GM12878 (cell line): ENCODE measurements at regions of chr14 and their contacts with region 1.

Region 1: DNA sequence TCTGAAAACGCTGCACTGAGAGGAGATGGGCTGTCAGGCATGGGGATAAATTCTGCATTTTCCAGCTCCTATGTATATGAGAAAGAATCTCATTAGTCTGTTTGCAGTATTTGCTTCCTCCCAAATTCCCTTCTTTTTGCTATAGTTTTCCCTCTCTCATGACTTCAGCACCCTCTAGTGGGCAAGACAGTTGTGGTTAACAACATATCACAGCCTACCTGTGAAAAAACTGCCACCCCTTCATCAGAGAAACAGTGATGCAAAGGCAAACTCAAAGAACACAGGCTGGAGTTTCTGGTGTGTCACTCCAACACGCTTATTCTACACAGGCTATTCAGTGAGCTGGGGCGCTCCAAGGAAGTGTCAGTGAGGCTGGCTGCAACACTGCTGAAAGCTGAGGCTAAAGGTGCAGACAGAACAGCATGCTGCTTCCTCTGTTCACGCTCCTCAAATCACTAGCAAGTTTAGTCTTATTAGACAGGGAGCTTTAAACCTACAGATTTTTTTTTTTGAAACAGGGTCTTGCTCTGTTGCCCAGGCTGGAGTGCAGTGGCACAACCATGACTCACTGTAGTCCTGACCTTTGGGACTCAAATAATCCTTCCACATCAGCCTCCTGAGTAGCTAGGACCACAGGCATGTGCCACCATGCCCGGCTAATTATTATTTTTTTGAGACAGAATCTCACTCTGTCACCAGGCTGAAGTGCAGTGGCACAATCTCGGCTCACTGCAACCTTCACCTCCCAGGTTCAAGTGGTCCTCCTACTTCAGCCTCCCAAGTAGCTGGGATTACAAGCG is 19.3 kb downstream of the ZC2HC1C start:
- DNase-seq: no peak
- ATAC-seq: peak; percentile 82
- H3K4me3 ChIP-seq: no peak overlapping the region
- H3K27ac ChIP-seq: no peak overlapping the region
- H3K4me1 ChIP-seq: no peaks in the 10 kb centered on the region
- H3K27me3 ChIP-seq: no peaks in the 10 kb centered on the region
- CTCF ChIP-seq: peak; percentile 64 to 83 (median 68)
- EP300 ChIP-seq: no peak
- POLR2A ChIP-seq: no peak
- RAD21 ChIP-seq: peak; percentile 91

Region 2: GRCh38 chr14:74852927-74853514 is 235.8 kb before region 1 on chr14:
- CTCF ChIA-PET with region 1: interaction called, 125 read pairs
- POLR2A ChIA-PET with region 1: no interaction called
- RAD21 ChIA-PET with region 1: no interaction called
- SMC1A ChIA-PET with region 1: interaction called, 4 read pairs
- in situ Hi-C with region 1: loop called (anchors 5 kb)
- intact Hi-C with region 1: no loop called
- DNase-seq: no peak
- ATAC-seq: peak; percentile 32
- H3K4me3 ChIP-seq: no peak overlapping the region
- H3K27ac ChIP-seq: no peak overlapping the region
- H3K4me1 ChIP-seq: no peaks in the 10 kb centered on the region
- H3K27me3 ChIP-seq: no peaks in the 10 kb centered on the region
- CTCF ChIP-seq: no peak
- EP300 ChIP-seq: no peak
- POLR2A ChIP-seq: no peak
- RAD21 ChIP-seq: no peak

Region 3: DNA sequence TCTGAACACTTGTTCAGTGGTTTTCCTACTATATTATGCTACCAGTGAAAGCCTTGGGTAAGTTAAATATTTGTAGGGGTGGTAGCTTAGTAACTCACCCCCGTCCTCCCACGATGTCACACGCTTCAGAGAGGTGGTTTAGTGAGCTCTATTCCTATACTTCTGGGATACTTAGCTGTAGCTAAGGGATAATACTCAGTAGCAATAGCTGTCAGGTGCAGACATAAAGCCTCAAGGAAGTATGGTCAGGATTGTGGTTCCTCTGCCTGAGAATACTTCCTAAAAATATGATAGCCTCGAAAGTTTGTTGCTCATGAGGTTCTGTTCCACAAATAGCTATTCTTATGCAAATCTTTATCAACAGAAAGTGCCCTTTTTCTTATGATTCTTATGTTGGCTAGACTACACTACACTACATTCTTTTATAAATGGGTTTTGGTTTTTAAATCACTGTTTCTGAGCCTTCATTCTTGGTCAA is 195.1 kb before region 1 on chr14:
- CTCF ChIA-PET with region 1: interaction called, 12 read pairs
- POLR2A ChIA-PET with region 1: no interaction called
- RAD21 ChIA-PET with region 1: interaction called, 4 read pairs
- SMC1A ChIA-PET with region 1: interaction called, 5 read pairs
- in situ Hi-C with region 1: no loop called
- intact Hi-C with region 1: no loop called
- DNase-seq: peak; percentile 37
- ATAC-seq: peak; percentile 69
- H3K4me3 ChIP-seq: no peak overlapping the region; the same call in 1 of the 2 replicates
- H3K27ac ChIP-seq: peak overlapping the region; percentile 63
- H3K4me1 ChIP-seq: peaks cover 35% of the 10 kb centered on the region
- H3K27me3 ChIP-seq: no peaks in the 10 kb centered on the region
- CTCF ChIP-seq: no peak
- EP300 ChIP-seq: no peak
- POLR2A ChIP-seq: no peak
- RAD21 ChIP-seq: no peak

Region 4: GRCh38 chr14:74934476-74935359 is 154.1 kb before region 1 on chr14:
- CTCF ChIA-PET with region 1: interaction called, 10 read pairs
- POLR2A ChIA-PET with region 1: interaction called, 3 read pairs
- RAD21 ChIA-PET with region 1: interaction called, 3 read pairs
- SMC1A ChIA-PET with region 1: interaction called, 3 read pairs
- in situ Hi-C with region 1: no loop called
- intact Hi-C with region 1: no loop called
- DNase-seq: no peak
- ATAC-seq: peak; percentile 53
- H3K4me3 ChIP-seq: no peak overlapping the region
- H3K27ac ChIP-seq: no peak overlapping the region
- H3K4me1 ChIP-seq: peaks cover 19% of the 10 kb centered on the region
- H3K27me3 ChIP-seq: no peaks in the 10 kb centered on the region
- CTCF ChIP-seq: no peak
- EP300 ChIP-seq: no peak
- POLR2A ChIP-seq: no peak
- RAD21 ChIP-seq: no peak

Region 5: DNA sequence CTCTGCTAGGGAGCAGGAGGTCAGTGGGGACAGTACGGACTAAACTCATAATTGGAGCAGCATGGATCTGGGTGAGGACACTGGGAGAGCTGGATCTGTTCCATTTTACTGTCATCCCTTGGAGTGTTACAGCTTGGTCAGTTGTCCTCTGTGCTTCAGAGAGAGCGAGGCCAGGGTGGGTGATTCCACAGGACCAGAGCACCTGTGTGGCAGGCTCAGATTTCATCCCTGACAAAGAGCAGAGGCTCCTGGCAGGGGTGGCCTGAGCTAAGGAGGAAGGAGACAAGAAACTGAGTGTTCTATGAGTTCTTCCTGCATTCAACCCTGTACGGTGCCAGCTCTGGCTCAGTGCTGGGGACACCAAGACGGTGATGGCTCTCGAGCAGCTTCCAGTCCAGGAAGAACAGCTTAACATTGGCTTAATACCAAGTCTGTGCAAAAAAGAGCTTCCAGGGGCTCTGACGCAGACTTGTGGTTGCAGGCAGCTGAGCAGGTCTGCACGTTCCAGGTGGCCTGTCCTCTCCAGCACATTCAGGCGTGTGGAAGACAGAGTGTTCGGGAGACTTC is 125.0 kb before region 1 on chr14:
- CTCF ChIA-PET with region 1: interaction called, 4 read pairs
- POLR2A ChIA-PET with region 1: no interaction called
- RAD21 ChIA-PET with region 1: interaction called, 12 read pairs
- SMC1A ChIA-PET with region 1: interaction called, 14 read pairs
- in situ Hi-C with region 1: no loop called
- intact Hi-C with region 1: no loop called
- DNase-seq: no peak
- ATAC-seq: peak; percentile 15
- H3K4me3 ChIP-seq: no peak overlapping the region
- H3K27ac ChIP-seq: no peak overlapping the region
- H3K4me1 ChIP-seq: peaks cover 14% of the 10 kb centered on the region
- H3K27me3 ChIP-seq: no peaks in the 10 kb centered on the region
- CTCF ChIP-seq: no peak
- EP300 ChIP-seq: no peak
- POLR2A ChIP-seq: no peak
- RAD21 ChIP-seq: no peak

Region 6: GRCh38 chr14:75077794-75078193 is 11.0 kb before region 1 on chr14:
- CTCF ChIA-PET with region 1: interaction called, 11 read pairs
- POLR2A ChIA-PET with region 1: no interaction called
- RAD21 ChIA-PET with region 1: no interaction called
- SMC1A ChIA-PET with region 1: interaction called, 5 read pairs
- in situ Hi-C with region 1: no loop called
- intact Hi-C with region 1: no loop called
- DNase-seq: no peak
- ATAC-seq: no peak
- H3K4me3 ChIP-seq: no peak overlapping the region
- H3K27ac ChIP-seq: no peak overlapping the region
- H3K4me1 ChIP-seq: no peaks in the 10 kb centered on the region
- H3K27me3 ChIP-seq: no peaks in the 10 kb centered on the region
- CTCF ChIP-seq: no peak
- EP300 ChIP-seq: no peak
- POLR2A ChIP-seq: no peak
- RAD21 ChIP-seq: no peak